AG04449 (cell line): ENCODE measurements at regions of chr5 and their contacts with region 1.

Region 1: DNA sequence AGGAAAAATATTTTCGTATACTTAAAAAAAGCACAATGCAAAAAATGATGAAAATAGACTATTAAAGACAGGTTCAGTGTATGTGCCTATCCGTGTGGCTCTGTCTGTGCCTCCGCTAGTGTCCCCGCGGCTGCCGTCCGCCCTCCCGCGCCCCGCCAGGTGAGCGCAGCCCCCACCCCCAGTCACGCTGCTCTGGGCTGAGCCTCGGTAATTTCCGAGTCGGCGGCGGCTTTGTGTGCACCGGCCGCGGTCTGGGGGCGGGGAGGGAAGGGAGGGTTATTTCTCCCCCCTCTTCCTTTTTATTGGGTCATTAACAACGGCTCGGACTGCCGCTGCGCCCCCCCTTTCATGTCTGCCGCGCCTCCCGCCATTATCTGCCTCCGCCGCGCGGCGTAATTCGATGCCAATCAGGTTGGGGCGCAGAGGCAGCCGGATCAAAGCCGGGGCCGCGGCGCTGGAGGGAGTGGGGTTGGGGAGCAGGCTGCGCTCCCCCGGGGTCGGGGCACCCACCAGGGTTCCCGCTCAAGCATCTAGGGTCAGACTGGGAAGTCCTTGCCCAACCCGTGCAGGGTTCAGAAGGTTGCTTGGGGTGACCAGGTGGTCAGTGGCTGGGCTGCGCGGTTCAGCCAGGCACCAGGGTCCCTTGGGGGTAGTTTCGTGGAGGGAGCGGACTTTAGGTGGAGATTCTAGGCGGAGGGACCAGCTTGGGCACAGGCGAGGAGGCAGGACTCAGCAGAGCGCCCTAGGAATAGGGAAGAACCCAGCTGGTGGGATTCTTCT is 39.5 kb upstream of the PSD2 start:
- DNase-seq: no peak
- H3K4me3 ChIP-seq: peak overlapping the region; percentile 30
- CTCF ChIP-seq: no peak

Region 2: DNA sequence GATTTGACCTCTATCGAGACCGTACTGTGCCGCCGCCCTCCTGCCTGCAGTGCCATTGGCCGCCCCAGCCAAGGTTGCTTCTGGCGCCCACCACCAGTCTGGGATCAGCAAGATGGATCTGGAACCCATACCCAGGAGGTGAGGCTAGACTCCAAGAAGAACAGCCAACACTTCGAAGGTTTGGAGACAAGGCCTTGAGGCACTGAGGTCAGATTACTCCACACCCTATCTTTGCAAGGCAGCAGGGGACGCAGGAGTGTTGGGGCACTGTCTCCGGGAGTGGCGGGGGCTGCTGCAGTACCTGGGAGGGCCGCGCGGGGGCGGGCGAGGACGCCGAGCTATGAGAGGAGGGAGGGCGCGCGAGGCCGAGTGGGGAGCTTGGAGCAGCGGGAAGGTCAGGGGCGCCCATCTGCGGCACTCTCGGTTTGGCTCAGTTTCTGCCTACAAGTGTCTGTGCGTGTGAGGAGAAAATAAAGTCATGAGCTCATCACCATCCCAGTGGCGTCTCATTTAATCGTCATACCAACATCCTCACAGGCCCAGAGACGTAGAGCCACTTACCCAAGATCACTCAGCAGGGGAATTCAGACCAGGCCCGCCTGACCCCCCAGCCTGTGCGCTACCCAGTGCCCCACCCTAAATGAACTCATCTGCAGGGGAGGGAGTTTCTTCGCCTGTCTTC is 19.0 kb after region 1 on chr5:
- CTCF ChIA-PET with region 1: interaction called, 13 read pairs
- POLR2A ChIA-PET with region 1: no interaction called
- DNase-seq: no peak
- H3K4me3 ChIP-seq: no peak overlapping the region
- CTCF ChIP-seq: peak; percentile 91

Region 3: DNA sequence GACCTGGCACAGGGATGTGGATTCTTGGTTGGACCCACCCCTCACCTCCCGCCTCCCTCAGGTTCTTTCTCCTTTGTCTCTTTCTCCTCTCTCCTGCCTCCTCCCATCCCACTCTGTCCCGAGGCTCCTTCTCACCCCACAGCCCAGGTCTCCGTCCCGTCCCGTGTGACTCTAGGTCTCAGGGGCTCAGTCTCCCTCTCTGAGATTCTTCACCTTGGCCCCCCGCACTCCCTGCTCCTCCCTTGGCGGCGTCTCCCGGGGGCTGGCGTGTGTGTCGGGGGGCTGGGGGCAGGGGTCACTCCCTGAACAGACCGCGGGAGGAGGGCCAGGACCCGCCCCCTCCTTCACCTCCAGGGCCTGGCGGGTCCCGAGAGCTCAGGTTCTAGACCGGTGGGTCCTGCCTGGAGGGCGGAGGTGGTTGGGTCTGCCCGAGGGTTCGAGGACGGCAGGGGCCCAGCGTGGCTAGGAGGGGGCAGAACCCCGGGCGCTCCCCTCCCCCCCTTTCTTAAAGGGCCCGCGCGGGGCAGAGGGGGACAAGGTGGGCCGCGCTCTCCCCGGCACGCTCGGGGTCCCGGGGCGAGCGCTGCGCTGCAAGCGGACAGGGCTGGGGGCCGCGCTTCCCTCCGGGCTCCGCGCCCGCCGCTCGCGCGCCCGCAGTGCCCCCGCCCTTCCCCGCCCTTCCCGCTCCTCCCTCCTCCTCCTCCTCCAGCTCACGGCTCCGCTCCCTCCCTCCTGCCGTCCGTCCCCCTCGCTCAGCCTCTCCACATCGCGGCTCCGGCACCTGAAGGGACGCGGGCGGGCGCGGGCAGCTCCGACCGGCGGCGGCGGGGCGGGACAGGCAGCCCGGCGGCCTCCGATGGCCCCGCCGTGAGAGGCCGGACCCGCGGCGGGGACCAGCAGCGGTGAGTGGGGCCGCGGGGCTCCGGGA is 39.3 kb after region 1 on chr5 and contains the start of gene PSD2:
- CTCF ChIA-PET with region 1: no interaction called
- POLR2A ChIA-PET with region 1: no interaction called
- DNase-seq: no peak
- H3K4me3 ChIP-seq: peak within 1 kb of the TSS; percentile 30
- CTCF ChIP-seq: no peak

Region 4: DNA sequence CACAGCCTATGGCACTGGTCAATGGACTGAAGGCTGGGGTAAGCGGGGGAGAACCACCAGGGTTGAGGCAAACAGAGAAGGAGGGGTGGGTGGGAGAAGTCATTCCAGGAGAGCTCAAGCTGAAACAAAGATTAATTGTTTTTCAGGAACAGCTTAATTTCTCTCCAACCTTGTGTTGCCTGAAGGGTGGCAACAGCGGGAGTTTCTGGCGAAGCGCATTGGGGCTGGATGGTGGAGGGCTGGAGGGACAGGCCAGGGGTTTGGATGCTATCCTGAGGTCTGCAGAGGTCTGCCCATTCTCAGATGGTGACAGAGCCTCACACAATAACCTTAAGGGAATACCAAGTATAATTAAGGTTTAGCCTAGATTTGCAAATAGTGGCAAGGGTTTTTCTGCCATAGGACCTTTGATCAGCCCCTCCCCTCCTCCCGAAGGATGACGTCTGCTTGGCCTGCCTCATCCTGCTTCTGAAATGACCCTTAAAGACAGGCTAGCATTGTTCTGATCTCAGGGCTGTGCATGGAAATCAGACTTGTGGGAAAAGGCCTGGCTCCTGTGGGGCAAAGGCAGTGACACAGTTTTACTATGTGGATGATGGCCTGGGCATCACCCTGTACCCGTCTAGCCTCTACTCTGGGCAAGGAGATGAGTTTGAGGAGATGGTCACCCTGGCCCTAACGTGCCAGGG is 72.3 kb after region 1 on chr5:
- CTCF ChIA-PET with region 1: no interaction called
- POLR2A ChIA-PET with region 1: no interaction called
- DNase-seq: no peak
- H3K4me3 ChIP-seq: no peak overlapping the region
- CTCF ChIP-seq: no peak